CD8-positive, alpha-beta T cell (primary cell): ENCODE measurements at regions of chr11 and their contacts with region 1.

Region 1: GRCh38 chr11:65711785-65712632 is at the start of gene KAT5:
- DNase-seq: peak; percentile 95 to 99 (median 98)
- ATAC-seq: peak; percentile 83
- H3K4me3 ChIP-seq: peak within 1 kb of the TSS; percentile 92 to 99
- H3K4me3 Mint-ChIP-seq: peak within 1 kb of the TSS; percentile 95
- H3K27ac ChIP-seq: peak within 1 kb of the TSS; percentile 99 to 100
- H3K27ac Mint-ChIP-seq: peak within 1 kb of the TSS; percentile 100
- H3K4me1 ChIP-seq: peaks cover 14% of the 10 kb centered on the region
- H3K4me1 Mint-ChIP-seq: peaks cover 21% of the 10 kb centered on the region
- H3K27me3 ChIP-seq: no peaks in the 10 kb centered on the region
- H3K27me3 Mint-ChIP-seq: no peaks in the 10 kb centered on the region
- CTCF ChIP-seq: peak; percentile 95
- total RNA-seq, gene KAT5: 149 to 151 TPM

Region 2: GRCh38 chr11:65625628-65626342 is 86.2 kb before region 1 on chr11:
- CTCF ChIA-PET with region 1: interaction called, 23 read pairs
- POLR2A ChIA-PET with region 1: no interaction called
- intact Hi-C with region 1: no loop called
- DNase-seq: peak in 8 of 9 experiments; percentile 24 to 83 (median 63)
- ATAC-seq: peak; percentile 88
- H3K4me3 ChIP-seq: no peak overlapping the region
- H3K4me3 Mint-ChIP-seq: no peak overlapping the region
- H3K27ac ChIP-seq: no peak overlapping the region
- H3K27ac Mint-ChIP-seq: peak overlapping the region; percentile 55
- H3K4me1 ChIP-seq: peaks cover 5% of the 10 kb centered on the region
- H3K4me1 Mint-ChIP-seq: peaks cover 9% of the 10 kb centered on the region
- H3K27me3 ChIP-seq: no peaks in the 10 kb centered on the region
- H3K27me3 Mint-ChIP-seq: no peaks in the 10 kb centered on the region
- CTCF ChIP-seq: peak; percentile 66

Region 3: DNA sequence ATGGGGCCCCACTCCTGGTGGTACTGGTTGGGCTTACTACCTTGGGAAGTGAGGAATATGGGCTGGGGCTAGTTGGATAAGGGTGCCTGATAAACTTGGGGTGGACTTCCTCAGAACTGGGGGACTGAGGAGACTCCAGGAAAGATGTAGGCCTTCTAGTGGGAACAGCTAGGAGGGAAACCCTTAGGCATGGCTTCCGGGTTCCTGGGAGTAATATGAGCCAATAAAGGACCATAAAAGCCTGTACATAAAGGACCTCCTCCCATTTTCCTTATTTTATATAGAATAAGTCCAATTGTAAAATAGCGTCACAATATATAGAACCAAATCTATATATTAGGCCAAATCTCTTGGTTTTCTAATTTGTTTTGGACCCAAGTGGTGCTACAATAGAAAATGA is 27.0 kb after region 1 on chr11:
- CTCF ChIA-PET with region 1: no interaction called
- POLR2A ChIA-PET with region 1: no interaction called
- intact Hi-C with region 1: no loop called
- DNase-seq: no peak
- ATAC-seq: no peak
- H3K4me3 ChIP-seq: no peak overlapping the region
- H3K4me3 Mint-ChIP-seq: no peak overlapping the region
- H3K27ac ChIP-seq: no peak overlapping the region
- H3K27ac Mint-ChIP-seq: no peak overlapping the region
- H3K4me1 ChIP-seq: no peaks in the 10 kb centered on the region
- H3K4me1 Mint-ChIP-seq: no peaks in the 10 kb centered on the region
- H3K27me3 ChIP-seq: no peaks in the 10 kb centered on the region
- H3K27me3 Mint-ChIP-seq: peaks cover 16% of the 10 kb centered on the region
- CTCF ChIP-seq: no peak

Region 4: DNA sequence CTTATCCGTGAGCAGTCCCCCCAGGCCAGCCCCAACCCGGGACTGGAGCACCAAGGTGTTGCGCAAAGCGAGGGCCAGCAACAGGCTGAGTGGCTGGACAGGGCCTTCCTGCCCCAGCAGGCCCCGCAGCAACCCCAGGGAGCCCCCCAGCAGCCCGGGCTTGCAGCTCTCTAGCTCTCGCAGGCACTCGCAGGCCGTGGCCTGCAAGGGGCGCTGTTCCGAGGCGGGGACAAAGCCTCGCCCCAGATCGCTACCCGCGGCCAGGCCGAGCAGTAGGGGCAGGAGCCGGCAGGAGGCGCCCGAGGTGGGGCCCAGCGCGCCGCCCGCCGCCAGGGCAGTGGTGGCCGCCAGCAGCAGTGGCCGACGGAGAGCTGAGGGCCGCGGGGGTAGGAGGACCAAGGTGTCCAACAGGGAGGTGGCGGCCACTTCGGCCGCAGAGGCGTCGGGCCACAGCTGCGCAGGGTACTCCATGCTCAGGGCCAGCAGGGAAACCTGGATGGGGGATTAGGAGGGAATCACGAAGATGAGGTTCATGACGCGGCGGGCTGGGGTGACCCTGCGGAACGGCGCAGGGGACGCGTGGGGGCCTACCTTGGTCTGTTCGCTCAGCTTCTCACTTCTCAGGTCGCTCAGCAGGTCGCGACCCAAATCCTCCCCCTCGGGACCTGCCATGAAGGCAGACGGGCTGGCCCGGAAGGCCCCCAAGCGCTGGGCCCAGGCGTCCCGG is 68.0 kb after region 1 on chr11:
- CTCF ChIA-PET with region 1: interaction called, 30 read pairs
- POLR2A ChIA-PET with region 1: no interaction called
- intact Hi-C with region 1: loop called in 1 of 2 experiments (anchors 1 kb)
- DNase-seq: peak; percentile 46 to 88 (median 76)
- ATAC-seq: peak; percentile 74
- H3K4me3 ChIP-seq: peak overlapping the region; percentile 85
- H3K4me3 Mint-ChIP-seq: peak overlapping the region; percentile 86
- H3K27ac ChIP-seq: peak overlapping the region; percentile 31 to 52
- H3K27ac Mint-ChIP-seq: peak overlapping the region; percentile 77
- H3K4me1 ChIP-seq: peaks cover 17% of the 10 kb centered on the region
- H3K4me1 Mint-ChIP-seq: peaks cover 8% of the 10 kb centered on the region
- H3K27me3 ChIP-seq: no peaks in the 10 kb centered on the region
- H3K27me3 Mint-ChIP-seq: peaks cover under 1% of the 10 kb centered on the region
- CTCF ChIP-seq: peak; percentile 97

Region 5: DNA sequence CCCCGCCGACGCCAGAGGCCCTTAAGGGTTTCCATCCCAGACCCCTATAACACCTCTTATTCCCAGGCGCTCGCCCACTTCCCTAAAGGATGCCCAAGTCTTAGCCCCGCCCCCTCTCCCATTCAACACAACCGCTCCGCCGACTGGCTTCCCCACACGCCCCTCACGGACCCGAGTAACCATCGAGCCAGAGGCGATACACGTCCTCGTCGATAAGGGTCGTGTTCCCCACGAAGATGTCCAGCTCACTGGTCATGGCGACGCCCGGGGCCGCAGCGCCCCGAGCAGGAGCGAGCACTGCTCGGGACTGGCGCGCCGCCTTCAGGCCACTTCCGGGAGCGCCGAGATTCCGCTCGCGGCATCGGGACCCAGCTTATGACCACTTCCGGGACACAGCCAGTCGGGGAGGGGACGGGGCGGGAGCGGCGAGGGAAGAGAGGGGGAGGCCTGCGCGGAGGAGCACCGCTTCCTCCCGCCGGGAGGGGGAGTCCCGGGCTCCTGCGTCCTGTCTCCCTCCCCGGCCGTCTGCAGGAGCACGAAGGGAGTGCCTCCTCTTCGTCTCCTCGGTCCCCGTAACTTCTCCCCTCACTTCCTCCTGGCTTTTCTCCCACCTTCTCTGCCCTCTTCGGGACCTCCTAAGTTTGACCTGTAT is 176.3 kb after region 1 on chr11 and contains the start of gene FIBP:
- CTCF ChIA-PET with region 1: interaction called, 16 read pairs
- POLR2A ChIA-PET with region 1: interaction called, 19 read pairs
- intact Hi-C with region 1: loop called (anchors 1 to 2 kb)
- DNase-seq: peak; percentile 89 to 98 (median 95)
- ATAC-seq: peak; percentile 57
- H3K4me3 ChIP-seq: peak within 1 kb of the TSS; percentile 57 to 87
- H3K4me3 Mint-ChIP-seq: peak within 1 kb of the TSS; percentile 83
- H3K27ac ChIP-seq: peak within 1 kb of the TSS; percentile 73 to 97
- H3K27ac Mint-ChIP-seq: peak within 1 kb of the TSS; percentile 98
- H3K4me1 ChIP-seq: peaks cover 48% of the 10 kb centered on the region
- H3K4me1 Mint-ChIP-seq: peaks cover 62% of the 10 kb centered on the region
- H3K27me3 ChIP-seq: no peaks in the 10 kb centered on the region
- H3K27me3 Mint-ChIP-seq: no peaks in the 10 kb centered on the region
- CTCF ChIP-seq: peak; percentile 71
- total RNA-seq, gene FIBP: 16.5 to 19.3 TPM

Region 6: DNA sequence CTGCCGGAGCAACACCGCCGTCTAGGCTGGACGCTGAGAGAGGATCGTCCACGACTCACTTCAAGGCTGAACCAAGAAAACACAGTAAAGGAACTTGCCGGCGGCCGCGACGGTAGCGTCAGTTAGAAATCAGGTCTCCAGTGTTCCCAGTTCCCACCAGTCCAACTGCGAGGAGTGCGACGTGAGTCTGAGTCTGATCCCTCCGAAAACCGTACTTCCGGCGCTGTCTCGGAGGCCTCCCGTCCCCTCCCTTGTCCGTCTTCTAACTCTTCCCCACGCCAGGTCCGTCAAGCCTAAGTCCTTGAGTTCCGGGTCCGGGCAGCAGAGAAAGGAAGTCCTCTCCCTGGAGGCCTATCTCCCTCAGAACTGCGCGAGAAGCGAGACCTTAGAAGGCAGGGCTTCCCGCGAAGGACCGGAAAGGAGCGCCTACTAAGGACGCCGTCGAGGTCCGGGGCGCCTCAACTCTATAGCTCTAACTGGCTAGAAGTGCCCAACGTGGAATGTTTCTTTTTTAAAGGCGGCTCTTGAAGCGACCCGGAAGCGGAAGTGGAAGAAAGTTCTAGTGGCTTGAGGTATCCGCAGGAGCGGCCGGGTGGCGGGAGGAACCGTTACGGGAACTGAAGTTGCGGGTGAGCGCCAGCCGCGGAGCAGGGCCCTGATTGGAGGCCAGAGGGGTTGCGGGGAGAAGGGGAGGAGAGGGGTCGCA is 290.1 kb after region 1 on chr11 and contains the starts of genes BANF1 and EIF1AD:
- CTCF ChIA-PET with region 1: interaction called, 6 read pairs
- POLR2A ChIA-PET with region 1: interaction called, 4 read pairs
- intact Hi-C with region 1: loop called (anchors 1 kb)
- DNase-seq: peak; percentile 85 to 98 (median 92)
- ATAC-seq: peak; percentile 83
- H3K4me3 ChIP-seq: peak within 1 kb of the TSS; percentile 80 to 98
- H3K4me3 Mint-ChIP-seq: peak within 1 kb of the TSS; percentile 99
- H3K27ac ChIP-seq: peak within 1 kb of the TSS; percentile 93 to 95
- H3K27ac Mint-ChIP-seq: peak within 1 kb of the TSS; percentile 98
- H3K4me1 ChIP-seq: peaks cover 21% of the 10 kb centered on the region
- H3K4me1 Mint-ChIP-seq: peaks cover 43% of the 10 kb centered on the region
- H3K27me3 ChIP-seq: no peaks in the 10 kb centered on the region
- H3K27me3 Mint-ChIP-seq: no peaks in the 10 kb centered on the region
- CTCF ChIP-seq: no peak
- total RNA-seq, gene BANF1: 31.6 to 34.0 TPM
- total RNA-seq, gene EIF1AD: 119 to 126 TPM

Region 7: GRCh38 chr11:66100272-66101065 is 388.5 kb after region 1 on chr11:
- CTCF ChIA-PET with region 1: no interaction called
- POLR2A ChIA-PET with region 1: no interaction called
- intact Hi-C with region 1: no loop called
- DNase-seq: peak; percentile 31 to 88 (median 73)
- ATAC-seq: peak; percentile 90
- H3K4me3 ChIP-seq: peak overlapping the region; percentile 40 to 48
- H3K4me3 Mint-ChIP-seq: peak overlapping the region; percentile 82
- H3K27ac ChIP-seq: peak overlapping the region; percentile 45 to 82
- H3K27ac Mint-ChIP-seq: peak overlapping the region; percentile 95
- H3K4me1 ChIP-seq: peaks cover 70% of the 10 kb centered on the region
- H3K4me1 Mint-ChIP-seq: peaks cover 69% of the 10 kb centered on the region
- H3K27me3 ChIP-seq: no peaks in the 10 kb centered on the region
- H3K27me3 Mint-ChIP-seq: no peaks in the 10 kb centered on the region
- CTCF ChIP-seq: no peak

Region 8: GRCh38 chr11:66344550-66345315 is 632.7 kb after region 1 on chr11 and contains the start of gene BRMS1:
- CTCF ChIA-PET with region 1: no interaction called
- POLR2A ChIA-PET with region 1: no interaction called
- intact Hi-C with region 1: loop called in 1 of 2 experiments (anchors 10 kb)
- DNase-seq: peak; percentile 89 to 98 (median 97)
- ATAC-seq: peak; percentile 81
- H3K4me3 ChIP-seq: peak within 1 kb of the TSS; percentile 79
- H3K4me3 Mint-ChIP-seq: peak within 1 kb of the TSS; percentile 96
- H3K27ac ChIP-seq: peak within 1 kb of the TSS; percentile 75 to 87
- H3K27ac Mint-ChIP-seq: peak within 1 kb of the TSS; percentile 94
- H3K4me1 ChIP-seq: peaks cover 36% of the 10 kb centered on the region
- H3K4me1 Mint-ChIP-seq: peaks cover 54% of the 10 kb centered on the region
- H3K27me3 ChIP-seq: no peaks in the 10 kb centered on the region
- H3K27me3 Mint-ChIP-seq: peaks cover 2% of the 10 kb centered on the region
- CTCF ChIP-seq: no peak
- total RNA-seq, gene BRMS1: 66.7 to 68.0 TPM